Activated naive CD8-positive, alpha-beta T cell treated with anti-CD3 and anti-CD28 coated beads, Interleukin-2, amount 10 ng/mL, durations not matched to agents 7 days and 5 days (primary cell): ENCODE measurements at regions of chr6 and their contacts with region 1.

Region 1: GRCh38 chr6:30769088-30769852 is 24.9 kb upstream of the IER3 start:
- DNase-seq: peak; percentile 77
- ATAC-seq: peak; percentile 75
- H3K4me3 Mint-ChIP-seq: peak overlapping the region; percentile 75
- H3K27ac Mint-ChIP-seq: peak overlapping the region; percentile 93
- H3K4me1 Mint-ChIP-seq: peaks cover 76% of the 10 kb centered on the region
- H3K27me3 Mint-ChIP-seq: no peaks in the 10 kb centered on the region

Region 2: DNA sequence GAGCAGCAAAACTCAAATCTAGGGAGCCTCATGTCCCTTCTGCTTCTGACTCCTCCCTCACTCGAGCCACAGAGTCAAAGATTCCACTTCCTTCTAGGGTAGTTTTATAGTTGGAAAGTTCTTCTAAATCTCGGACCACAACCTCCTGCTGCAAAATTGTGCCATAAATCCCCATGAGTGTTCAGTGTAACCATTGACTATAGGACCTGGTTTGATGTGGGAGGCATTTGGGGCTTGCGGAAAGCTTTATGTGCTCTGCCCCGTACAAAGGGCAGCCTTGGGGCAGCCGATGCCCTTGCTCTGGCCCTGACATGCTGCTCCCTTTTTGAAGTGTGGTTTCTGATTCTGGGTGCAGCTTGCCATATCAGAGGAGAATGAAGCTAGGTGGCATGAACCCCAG is 18.7 kb after region 1 on chr6:
- POLR2A ChIA-PET with region 1: interaction called, 60 read pairs
- DNase-seq: peak; percentile 55
- ATAC-seq: peak; percentile 66
- H3K4me3 Mint-ChIP-seq: peak overlapping the region; percentile 69
- H3K27ac Mint-ChIP-seq: peak overlapping the region; percentile 89
- H3K4me1 Mint-ChIP-seq: peaks cover 63% of the 10 kb centered on the region
- H3K27me3 Mint-ChIP-seq: no peaks in the 10 kb centered on the region

Region 3: DNA sequence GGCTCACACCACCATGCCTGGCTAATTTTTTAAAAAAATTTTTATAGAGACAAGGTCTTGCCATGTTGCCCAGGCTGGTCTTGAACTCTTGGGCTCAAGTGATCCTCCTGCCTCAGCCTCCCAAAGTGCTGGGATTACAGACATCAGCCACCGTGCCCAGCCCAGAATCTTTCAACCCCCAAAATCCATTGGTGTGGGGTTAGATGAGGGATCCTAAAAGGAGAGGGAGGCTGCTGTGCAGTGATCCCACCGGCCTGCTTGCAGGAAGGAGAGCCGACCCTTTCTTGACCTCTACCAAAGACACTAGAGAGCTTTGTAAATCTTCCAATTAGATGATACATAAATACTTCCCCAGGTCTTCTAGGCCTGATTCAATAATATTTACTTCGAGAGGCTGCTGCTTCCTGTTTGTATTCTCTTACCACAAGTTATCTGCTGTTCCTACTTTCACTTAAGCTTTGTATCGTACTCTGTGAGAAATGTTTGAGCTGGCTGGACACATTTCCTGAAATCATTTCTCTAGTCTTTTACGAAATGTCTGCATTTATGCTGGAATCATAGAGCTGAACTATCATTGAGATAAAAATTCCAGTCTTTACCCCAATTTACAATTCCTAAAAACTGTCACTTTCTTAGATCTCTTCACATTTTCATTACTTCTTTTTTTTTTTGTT is 24.4 kb after region 1 on chr6:
- POLR2A ChIA-PET with region 1: interaction called, 60 read pairs
- DNase-seq: no peak
- ATAC-seq: peak; percentile 87
- H3K4me3 Mint-ChIP-seq: peak overlapping the region; percentile 73
- H3K27ac Mint-ChIP-seq: peak overlapping the region; percentile 96
- H3K4me1 Mint-ChIP-seq: peaks cover 60% of the 10 kb centered on the region
- H3K27me3 Mint-ChIP-seq: no peaks in the 10 kb centered on the region

Region 4: GRCh38 chr6:30814136-30815040 is 45.1 kb after region 1 on chr6:
- POLR2A ChIA-PET with region 1: interaction called, 16 read pairs
- DNase-seq: no peak
- ATAC-seq: peak; percentile 69
- H3K4me3 Mint-ChIP-seq: peak overlapping the region; percentile 59
- H3K27ac Mint-ChIP-seq: peak overlapping the region; percentile 93
- H3K4me1 Mint-ChIP-seq: peaks cover 53% of the 10 kb centered on the region
- H3K27me3 Mint-ChIP-seq: no peaks in the 10 kb centered on the region